ENCODE measurements at regions of chr2 and their contacts with region 1.

Region 1: DNA sequence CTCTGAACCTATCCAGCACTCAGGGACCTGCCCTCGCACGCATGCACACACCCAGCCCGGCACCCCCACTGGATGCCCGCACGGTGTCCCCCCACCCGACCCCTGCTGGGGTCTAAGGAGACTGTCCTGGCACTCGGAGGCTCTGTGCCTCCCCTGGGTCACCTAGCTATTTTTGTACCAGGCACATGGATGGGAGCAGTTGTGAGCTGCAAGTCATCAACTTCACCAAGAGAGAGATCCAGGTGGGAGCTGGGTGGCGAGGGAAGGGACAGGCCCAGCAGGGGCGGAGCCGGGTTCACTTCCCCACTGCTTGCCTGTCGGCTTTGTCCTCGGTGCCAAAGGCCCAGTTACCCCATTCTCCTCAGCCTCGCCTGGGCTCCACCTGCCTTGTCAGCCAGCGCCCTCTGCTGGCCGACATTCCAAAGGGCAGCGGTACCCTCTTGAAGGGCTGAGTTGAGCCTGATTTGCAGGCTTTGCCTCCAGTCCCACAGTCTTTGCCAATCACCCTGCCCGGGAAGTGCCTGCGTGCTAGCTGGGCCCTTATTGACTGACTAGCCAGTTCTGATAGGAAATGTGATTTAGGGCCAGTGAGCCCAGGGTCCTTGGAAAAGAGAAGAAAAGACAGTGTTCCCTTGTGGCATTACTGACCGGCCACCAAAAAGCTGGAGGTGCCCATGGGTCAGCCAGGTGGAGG is 5.8 kb downstream of the NT5DC4 start:
- DNase-seq: peak; percentile 61
- ATAC-seq: peak; percentile 86
- H3K4me3 ChIP-seq: no peak overlapping the region
- H3K27ac ChIP-seq: peak overlapping the region; percentile 39; the same call in 1 of the 2 replicates
- H3K4me1 ChIP-seq: peaks cover 22% of the 10 kb centered on the region
- H3K27me3 ChIP-seq: no peaks in the 10 kb centered on the region
- CTCF ChIP-seq: peak; percentile 98 to 99 (median 99); a peak in 5 of 6 replicates
- EP300 ChIP-seq: no peak; a peak in 1 of 4 replicates
- POLR2A ChIP-seq: no peak
- RAD21 ChIP-seq: peak; percentile 100

Region 2: DNA sequence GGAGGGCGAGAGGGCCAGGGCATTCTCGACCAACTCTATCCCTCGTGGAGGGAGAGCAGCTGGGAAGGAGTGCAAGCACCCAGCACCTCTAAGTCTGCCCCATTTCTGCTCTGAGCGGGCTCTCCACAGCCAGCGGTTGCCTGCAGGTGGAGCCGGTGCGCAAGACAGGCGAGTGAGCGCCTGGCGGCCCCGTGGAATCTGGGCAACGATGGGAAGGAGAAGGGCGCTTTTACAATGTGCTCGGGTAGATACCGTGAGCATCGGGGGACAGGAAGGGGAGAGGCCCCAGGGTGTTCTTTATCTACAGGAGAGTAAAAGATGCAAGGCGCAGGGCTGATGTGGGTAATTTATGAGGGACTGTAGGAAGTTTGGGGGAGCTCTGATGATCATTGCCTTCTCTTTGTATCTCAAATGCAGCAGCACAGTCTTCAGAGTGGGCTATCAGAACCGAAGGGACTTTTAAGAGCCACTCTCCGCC is 245.6 kb before region 1 on chr2:
- CTCF ChIA-PET with region 1: interaction called, 5 read pairs
- POLR2A ChIA-PET with region 1: no interaction called
- RAD21 ChIA-PET with region 1: interaction called, 4 read pairs
- SMC1A ChIA-PET with region 1: no interaction called
- in situ Hi-C with region 1: no loop called
- intact Hi-C with region 1: loop called (anchors 5 kb)
- DNase-seq: peak; percentile 26
- ATAC-seq: peak; percentile 90
- H3K4me3 ChIP-seq: peak overlapping the region; percentile 87
- H3K27ac ChIP-seq: peak overlapping the region; percentile 66
- H3K4me1 ChIP-seq: peaks cover 14% of the 10 kb centered on the region
- H3K27me3 ChIP-seq: no peaks in the 10 kb centered on the region
- CTCF ChIP-seq: peak; percentile 85 to 96 (median 95)
- EP300 ChIP-seq: no peak
- POLR2A ChIP-seq: no peak; the same call in none of the 2 replicates
- RAD21 ChIP-seq: peak; percentile 83

Region 3: DNA sequence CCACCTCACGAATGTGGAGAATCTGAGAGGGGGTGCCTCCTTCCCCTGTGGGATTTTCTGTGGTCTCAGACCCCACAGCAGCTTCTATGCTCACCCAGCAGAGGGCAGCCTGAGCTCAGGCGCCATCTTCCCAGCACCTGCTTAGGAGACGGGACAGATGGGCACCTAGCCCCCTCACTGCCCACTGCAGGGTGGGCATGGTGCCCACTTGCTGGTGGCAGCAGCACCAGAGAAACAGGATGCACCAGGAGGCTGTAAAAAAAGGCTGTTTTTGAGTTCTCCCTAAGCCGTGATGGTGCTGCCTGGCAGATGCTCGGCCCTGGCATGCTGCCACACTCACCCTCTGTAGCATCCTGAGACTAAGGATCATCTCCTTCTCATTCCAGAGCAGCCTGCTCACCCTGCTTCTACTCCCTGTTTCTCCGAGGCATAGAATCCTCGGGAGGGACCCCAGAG is 100.0 kb before region 1 on chr2:
- CTCF ChIA-PET with region 1: interaction called, 671 read pairs
- POLR2A ChIA-PET with region 1: interaction called, 41 read pairs
- RAD21 ChIA-PET with region 1: interaction called, 494 read pairs
- SMC1A ChIA-PET with region 1: interaction called, 455 read pairs
- in situ Hi-C with region 1: loop called (anchors 5 kb)
- intact Hi-C with region 1: loop called (anchors 1 kb)
- DNase-seq: no peak
- ATAC-seq: peak; percentile 86
- H3K4me3 ChIP-seq: no peak overlapping the region
- H3K27ac ChIP-seq: no peak overlapping the region
- H3K4me1 ChIP-seq: peaks cover 19% of the 10 kb centered on the region
- H3K27me3 ChIP-seq: no peaks in the 10 kb centered on the region
- CTCF ChIP-seq: peak; percentile 91 to 95 (median 92)
- EP300 ChIP-seq: no peak
- POLR2A ChIP-seq: no peak
- RAD21 ChIP-seq: peak; percentile 94

Region 4: DNA sequence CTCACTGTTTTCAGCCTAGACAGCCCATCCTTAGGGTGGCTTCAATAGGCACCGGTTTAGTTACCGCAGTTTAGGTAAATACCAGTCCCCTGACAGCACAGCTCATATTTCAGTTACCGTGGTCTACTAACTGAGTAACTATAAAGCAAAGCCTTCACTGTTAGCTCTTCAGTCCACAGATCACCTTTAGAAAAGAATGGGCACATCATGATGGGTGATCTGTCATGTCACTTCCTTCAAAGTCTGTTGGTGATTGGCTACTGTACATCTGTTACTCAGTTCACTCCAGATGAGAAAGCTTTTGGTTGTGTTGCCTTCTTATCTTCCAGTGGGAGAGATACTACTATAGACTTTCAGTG is 59.9 kb before region 1 on chr2:
- CTCF ChIA-PET with region 1: interaction called, 10 read pairs
- POLR2A ChIA-PET with region 1: interaction called, 7 read pairs
- RAD21 ChIA-PET with region 1: interaction called, 5 read pairs
- SMC1A ChIA-PET with region 1: interaction called, 14 read pairs
- in situ Hi-C with region 1: no loop called
- intact Hi-C with region 1: no loop called
- DNase-seq: no peak
- ATAC-seq: peak; percentile 87
- H3K4me3 ChIP-seq: no peak overlapping the region
- H3K27ac ChIP-seq: no peak overlapping the region
- H3K4me1 ChIP-seq: no peaks in the 10 kb centered on the region
- H3K27me3 ChIP-seq: no peaks in the 10 kb centered on the region
- CTCF ChIP-seq: no peak
- EP300 ChIP-seq: no peak
- POLR2A ChIP-seq: no peak
- RAD21 ChIP-seq: no peak

Region 5: DNA sequence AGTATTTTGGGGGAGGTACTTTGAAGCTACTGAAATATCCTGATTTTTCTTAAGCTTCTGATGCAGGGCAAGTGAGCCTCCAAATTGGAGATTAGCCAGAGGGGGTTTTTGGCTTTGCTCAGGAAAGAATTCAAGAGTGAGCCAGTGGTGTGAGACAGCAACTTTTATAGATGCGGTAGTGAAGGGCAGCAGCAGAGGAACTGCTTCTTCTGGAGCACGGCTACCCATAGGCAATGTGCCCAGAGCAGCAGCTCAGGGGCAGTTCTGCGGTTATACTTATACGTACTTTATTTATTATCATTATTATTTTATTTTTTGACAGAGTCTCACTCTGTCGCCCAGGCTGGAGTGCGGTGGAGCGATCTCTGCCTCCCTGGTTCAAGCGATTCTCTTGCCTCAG is 25.6 kb before region 1 on chr2:
- CTCF ChIA-PET with region 1: interaction called, 102 read pairs
- POLR2A ChIA-PET with region 1: interaction called, 51 read pairs
- RAD21 ChIA-PET with region 1: interaction called, 143 read pairs
- SMC1A ChIA-PET with region 1: interaction called, 107 read pairs
- in situ Hi-C with region 1: no loop called
- intact Hi-C with region 1: no loop called
- DNase-seq: no peak
- ATAC-seq: peak; percentile 25; the same call in 2 of the 3 replicates
- H3K4me3 ChIP-seq: no peak overlapping the region
- H3K27ac ChIP-seq: peak overlapping the region; percentile 63
- H3K4me1 ChIP-seq: peaks cover 36% of the 10 kb centered on the region
- H3K27me3 ChIP-seq: no peaks in the 10 kb centered on the region
- CTCF ChIP-seq: no peak
- EP300 ChIP-seq: no peak
- POLR2A ChIP-seq: no peak
- RAD21 ChIP-seq: no peak

Region 6: DNA sequence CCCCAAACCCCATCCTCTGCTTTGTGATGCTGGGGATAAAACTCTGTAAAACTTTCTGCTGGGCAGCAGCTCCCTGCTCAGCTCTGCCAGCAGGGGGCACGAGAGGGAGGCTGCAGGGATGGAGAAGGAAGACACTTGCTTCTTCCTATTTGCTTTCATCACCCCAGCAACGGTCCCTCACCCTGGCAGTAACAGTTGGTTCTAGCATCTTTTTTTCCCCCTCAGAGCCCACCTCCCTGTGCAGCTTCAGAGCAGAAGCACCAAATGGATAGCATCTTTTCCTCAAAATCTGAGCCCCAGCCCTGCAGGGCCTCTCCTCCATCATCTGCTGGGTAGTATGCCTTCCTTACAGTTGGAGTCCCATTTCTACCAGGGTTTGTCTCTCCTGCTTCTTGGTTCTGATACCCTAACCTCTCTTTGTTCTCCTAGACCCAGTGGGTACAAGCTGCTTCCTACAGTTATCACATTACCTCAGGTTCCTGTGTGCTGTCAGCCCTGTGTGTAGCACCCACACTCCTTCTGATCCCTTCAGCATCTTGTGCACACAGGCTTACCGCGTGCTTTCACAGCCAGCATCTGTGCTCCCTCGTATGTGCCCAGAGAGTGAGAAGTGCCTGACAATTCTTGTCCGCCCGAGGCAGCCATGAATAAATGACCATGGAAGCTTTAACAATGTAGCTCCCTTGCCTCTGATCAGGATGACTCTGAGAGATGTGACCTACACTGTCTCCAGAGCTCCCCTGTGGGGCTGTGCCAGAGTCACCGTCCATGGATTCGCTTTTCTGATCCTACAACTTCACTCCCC is 23.3 kb after region 1 on chr2:
- CTCF ChIA-PET with region 1: interaction called, 12 read pairs
- POLR2A ChIA-PET with region 1: interaction called, 3 read pairs
- RAD21 ChIA-PET with region 1: interaction called, 7 read pairs
- SMC1A ChIA-PET with region 1: interaction called, 25 read pairs
- in situ Hi-C with region 1: no loop called
- intact Hi-C with region 1: no loop called
- DNase-seq: no peak
- ATAC-seq: peak; percentile 95
- H3K4me3 ChIP-seq: no peak overlapping the region
- H3K27ac ChIP-seq: no peak overlapping the region
- H3K4me1 ChIP-seq: no peaks in the 10 kb centered on the region
- H3K27me3 ChIP-seq: no peaks in the 10 kb centered on the region
- CTCF ChIP-seq: peak; percentile 95 to 98 (median 98); a peak in 5 of 6 replicates
- EP300 ChIP-seq: no peak
- POLR2A ChIP-seq: no peak
- RAD21 ChIP-seq: peak; percentile 98